ENCODE measurements at regions of chr15 and their contacts with region 1.

Region 1: GRCh38 chr15:89599021-89599420 is 23.8 kb downstream of the TICRR start:
- DNase-seq: no peak
- ATAC-seq: no peak
- H3K4me3 ChIP-seq: no peak overlapping the region
- H3K27ac ChIP-seq: no peak overlapping the region
- H3K4me1 ChIP-seq: no peaks in the 10 kb centered on the region
- H3K27me3 ChIP-seq: no peaks in the 10 kb centered on the region
- CTCF ChIP-seq: no peak

Region 2: DNA sequence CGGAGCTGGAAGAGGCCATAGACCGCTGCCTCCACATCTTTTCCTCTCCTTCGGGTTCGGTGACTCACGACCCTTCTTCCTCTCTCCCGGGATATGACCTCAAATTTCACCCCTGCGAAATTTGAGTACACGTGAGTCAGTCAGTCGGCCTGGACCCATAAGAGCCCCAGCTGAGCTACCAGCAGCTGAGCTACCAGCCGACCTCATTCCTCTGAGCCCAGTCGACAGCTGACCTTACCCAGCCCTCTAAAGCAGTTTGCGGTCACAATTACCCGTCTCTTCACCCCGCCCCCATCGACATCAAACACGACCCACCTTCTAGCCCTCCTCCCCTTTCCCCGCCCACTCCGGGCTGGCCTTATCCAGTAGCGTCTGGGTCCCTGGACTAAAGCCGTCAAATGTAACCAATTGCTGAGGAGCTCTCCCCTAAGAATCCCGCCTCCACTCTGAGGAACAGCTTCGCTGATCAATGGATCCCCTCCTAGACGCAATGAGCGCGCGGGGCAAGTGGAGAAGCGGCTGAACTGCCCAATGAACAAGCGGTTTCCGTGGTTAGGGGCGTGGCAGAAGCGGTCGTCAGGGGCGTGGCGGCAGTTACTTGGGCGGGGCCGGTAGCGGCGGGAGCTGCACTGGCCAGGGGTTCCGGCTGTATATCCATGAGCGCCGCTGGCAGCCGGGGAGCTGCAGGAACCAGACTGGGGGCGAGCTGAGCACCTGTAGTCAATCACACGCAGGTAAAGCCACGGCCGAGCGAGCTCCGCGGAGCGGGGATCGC is 511.0 kb before region 1 on chr15 and contains the start of gene ABHD2:
- CTCF ChIA-PET with region 1: interaction called, 10 read pairs
- POLR2A ChIA-PET with region 1: no interaction called
- in situ Hi-C with region 1: no loop called
- intact Hi-C with region 1: no loop called
- DNase-seq: peak; percentile 100
- ATAC-seq: peak; percentile 96
- H3K4me3 ChIP-seq: peak within 1 kb of the TSS; percentile 84
- H3K27ac ChIP-seq: peak within 1 kb of the TSS; percentile 97
- H3K4me1 ChIP-seq: peaks cover 40% of the 10 kb centered on the region
- H3K27me3 ChIP-seq: no peaks in the 10 kb centered on the region
- CTCF ChIP-seq: no peak
- total RNA-seq, gene ABHD2: 95.0 TPM

Region 3: DNA sequence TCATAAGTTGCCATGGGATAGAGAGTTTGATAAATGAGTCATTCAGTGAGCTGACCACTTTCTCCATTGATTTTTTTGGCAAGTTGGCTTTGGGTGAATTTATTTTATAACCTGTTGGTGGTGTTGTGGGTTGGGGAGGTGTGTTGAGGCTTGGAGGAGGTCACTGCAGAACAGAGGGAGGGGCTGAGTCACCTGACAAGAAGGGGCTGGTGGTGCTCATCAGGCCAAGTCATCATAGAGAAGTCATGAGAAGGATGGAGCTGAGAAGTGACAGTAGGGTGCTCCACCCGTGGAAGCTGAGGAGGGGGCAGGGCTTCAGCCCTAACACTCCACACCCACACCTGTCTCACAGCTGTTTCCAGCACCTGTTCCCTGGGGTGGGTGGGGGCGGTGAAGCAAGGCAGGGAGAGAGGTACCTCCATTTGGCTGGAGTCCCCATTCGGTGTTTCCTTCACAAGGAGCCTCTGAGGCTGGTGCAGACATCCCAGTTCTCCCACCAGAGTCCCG is 113.1 kb before region 1 on chr15:
- CTCF ChIA-PET with region 1: no interaction called
- POLR2A ChIA-PET with region 1: no interaction called
- in situ Hi-C with region 1: no loop called
- intact Hi-C with region 1: no loop called
- DNase-seq: no peak
- ATAC-seq: no peak
- H3K4me3 ChIP-seq: no peak overlapping the region
- H3K27ac ChIP-seq: no peak overlapping the region
- H3K4me1 ChIP-seq: no peaks in the 10 kb centered on the region
- H3K27me3 ChIP-seq: no peaks in the 10 kb centered on the region
- CTCF ChIP-seq: no peak

Region 4: DNA sequence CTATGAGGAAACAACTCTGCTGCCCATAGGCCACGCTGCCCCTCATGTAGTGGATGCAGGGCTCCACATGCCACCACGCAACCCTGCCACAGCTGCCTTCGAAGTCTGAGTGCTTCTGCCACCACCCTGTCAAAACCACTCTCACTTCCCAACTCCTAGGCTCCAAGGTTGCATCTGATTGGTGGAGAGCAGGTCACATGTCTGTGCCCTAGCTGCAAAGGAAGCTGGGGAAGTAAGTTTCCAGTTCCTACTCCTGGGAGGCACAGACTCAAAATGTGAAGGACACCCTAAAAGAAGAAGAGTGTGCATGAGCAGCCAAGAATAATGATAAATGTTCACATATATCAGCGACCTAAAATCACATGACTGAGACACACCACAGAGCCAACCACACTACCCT is 55.6 kb before region 1 on chr15:
- CTCF ChIA-PET with region 1: no interaction called
- POLR2A ChIA-PET with region 1: interaction called, 19 read pairs
- in situ Hi-C with region 1: no loop called
- intact Hi-C with region 1: no loop called
- DNase-seq: no peak
- ATAC-seq: 0 out of 2 replicates have a peak, but pooled peaks have one; percentile 26
- H3K4me3 ChIP-seq: no peak overlapping the region
- H3K27ac ChIP-seq: no peak overlapping the region
- H3K4me1 ChIP-seq: no peaks in the 10 kb centered on the region
- H3K27me3 ChIP-seq: no peaks in the 10 kb centered on the region
- CTCF ChIP-seq: no peak

Region 5: DNA sequence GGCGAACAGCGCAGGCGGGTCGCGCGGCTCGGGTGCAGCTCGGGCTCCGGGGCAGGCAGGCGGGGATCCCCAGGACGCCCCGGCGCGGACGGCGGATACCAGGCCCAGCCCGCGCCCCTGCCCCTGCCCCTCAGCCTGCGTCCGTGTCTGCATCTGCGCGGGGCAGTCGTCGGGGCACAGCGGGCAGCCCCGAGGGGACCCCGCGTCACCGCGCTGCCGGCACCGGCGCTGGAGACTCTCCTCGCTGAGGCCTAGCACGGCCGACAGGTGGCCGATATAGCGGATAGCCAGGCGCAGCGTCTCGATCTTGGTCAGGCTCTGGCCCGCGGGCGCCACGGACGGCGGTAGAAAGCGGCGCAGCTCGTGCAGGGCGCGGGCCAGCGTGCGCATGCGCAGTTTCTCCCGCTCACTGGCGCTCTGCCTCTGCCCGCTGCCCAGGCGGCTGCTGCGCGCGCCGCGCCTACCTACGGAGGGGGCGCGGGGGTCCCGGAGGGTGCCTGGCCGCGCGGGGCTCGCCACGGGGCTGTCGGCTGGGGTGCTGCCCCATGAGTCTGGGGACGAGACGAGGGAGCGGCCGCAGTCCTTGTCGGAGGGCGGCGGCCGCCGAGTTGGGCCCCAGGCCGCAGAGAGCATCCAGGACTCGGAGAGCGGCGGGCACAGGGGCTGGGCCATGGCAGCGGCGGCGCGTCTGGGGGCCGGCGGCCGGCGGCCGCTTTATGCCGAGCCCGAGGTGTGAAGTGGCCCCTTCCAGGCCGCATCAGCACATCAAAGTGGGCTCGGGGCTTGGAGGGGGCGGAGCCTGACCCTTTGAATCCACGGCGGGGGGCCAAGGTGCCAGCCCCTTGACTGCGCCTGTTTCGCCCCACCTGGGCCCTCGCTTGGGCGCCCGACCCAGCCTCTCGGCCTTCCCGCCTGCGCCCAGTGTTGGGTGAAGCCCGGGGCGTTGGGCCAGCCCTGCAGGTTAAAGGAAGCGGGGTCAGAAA is 151.8 kb after region 1 on chr15 and contains the start of gene MESP1:
- CTCF ChIA-PET with region 1: no interaction called
- POLR2A ChIA-PET with region 1: interaction called, 10 read pairs
- in situ Hi-C with region 1: no loop called
- intact Hi-C with region 1: no loop called
- DNase-seq: peak; percentile 48
- ATAC-seq: peak; percentile 94
- H3K4me3 ChIP-seq: peak within 1 kb of the TSS; percentile 54 to 57
- H3K27ac ChIP-seq: peak within 1 kb of the TSS; percentile 58
- H3K4me1 ChIP-seq: peaks cover 18% of the 10 kb centered on the region
- H3K27me3 ChIP-seq: no peaks in the 10 kb centered on the region
- CTCF ChIP-seq: peak; percentile 85
- total RNA-seq, gene MESP1: 6.4 TPM

Region 6: GRCh38 chr15:89772932-89773583 is 174.0 kb after region 1 on chr15:
- CTCF ChIA-PET with region 1: no interaction called
- POLR2A ChIA-PET with region 1: no interaction called
- in situ Hi-C with region 1: no loop called
- intact Hi-C with region 1: no loop called
- DNase-seq: no peak
- ATAC-seq: no peak
- H3K4me3 ChIP-seq: no peak overlapping the region
- H3K27ac ChIP-seq: no peak overlapping the region
- H3K4me1 ChIP-seq: no peaks in the 10 kb centered on the region; the same call in 1 of the 2 replicates
- H3K27me3 ChIP-seq: no peaks in the 10 kb centered on the region
- CTCF ChIP-seq: no peak

Measured in Panc1 (cell line).